ENCODE measurements at regions of chr7 and their contacts with region 1.

Region 1: GRCh38 chr7:90346336-90347125 is at the start of gene GTPBP10:
- DNase-seq: peak; percentile 88 to 99 (median 94)
- ATAC-seq: peak; percentile 92 to 99 (median 96)
- H3K4me3 ChIP-seq: peak within 1 kb of the TSS; percentile 86 to 90
- H3K4me3 Mint-ChIP-seq: peak within 1 kb of the TSS; percentile 93 to 95 (median 95)
- H3K27ac ChIP-seq: peak within 1 kb of the TSS; percentile 94
- H3K27ac Mint-ChIP-seq: peak within 1 kb of the TSS; percentile 97 to 99
- H3K4me1 ChIP-seq: peaks cover 13 to 19% of the 10 kb centered on the region in 2 experiments
- H3K4me1 Mint-ChIP-seq: peaks cover 50 to 57% (median 56%) of the 10 kb centered on the region in 3 donors
- H3K27me3 ChIP-seq: no peaks in the 10 kb centered on the region
- H3K27me3 Mint-ChIP-seq: no peaks in the 10 kb centered on the region
- total RNA-seq, gene GTPBP10: 18.4 to 31.8 (median 29.7) TPM

Region 2: GRCh38 chr7:89826557-89826956 is 520.0 kb before region 1 on chr7:
- CTCF ChIA-PET with region 1: no interaction called
- POLR2A ChIA-PET with region 1: no interaction called
- DNase-seq: no peak
- ATAC-seq: no peak
- H3K4me3 ChIP-seq: no peak overlapping the region
- H3K4me3 Mint-ChIP-seq: no peak overlapping the region
- H3K27ac ChIP-seq: no peak overlapping the region
- H3K27ac Mint-ChIP-seq: no peak overlapping the region
- H3K4me1 ChIP-seq: no peaks in the 10 kb centered on the region
- H3K4me1 Mint-ChIP-seq: no peaks in the 10 kb centered on the region
- H3K27me3 ChIP-seq: no peaks in the 10 kb centered on the region
- H3K27me3 Mint-ChIP-seq: no peaks in the 10 kb centered on the region

Region 3: GRCh38 chr7:90334193-90334843 is 12.2 kb before region 1 on chr7:
- CTCF ChIA-PET with region 1: no interaction called
- POLR2A ChIA-PET with region 1: no interaction called
- DNase-seq: no peak
- ATAC-seq: no peak
- H3K4me3 ChIP-seq: no peak overlapping the region
- H3K4me3 Mint-ChIP-seq: no peak overlapping the region
- H3K27ac ChIP-seq: no peak overlapping the region
- H3K27ac Mint-ChIP-seq: no peak overlapping the region
- H3K4me1 ChIP-seq: no peaks in the 10 kb centered on the region
- H3K4me1 Mint-ChIP-seq: no peaks in the 10 kb centered on the region
- H3K27me3 ChIP-seq: no peaks in the 10 kb centered on the region
- H3K27me3 Mint-ChIP-seq: peaks cover 5 to 8% of the 10 kb centered on the region in 2 donors

Region 4: DNA sequence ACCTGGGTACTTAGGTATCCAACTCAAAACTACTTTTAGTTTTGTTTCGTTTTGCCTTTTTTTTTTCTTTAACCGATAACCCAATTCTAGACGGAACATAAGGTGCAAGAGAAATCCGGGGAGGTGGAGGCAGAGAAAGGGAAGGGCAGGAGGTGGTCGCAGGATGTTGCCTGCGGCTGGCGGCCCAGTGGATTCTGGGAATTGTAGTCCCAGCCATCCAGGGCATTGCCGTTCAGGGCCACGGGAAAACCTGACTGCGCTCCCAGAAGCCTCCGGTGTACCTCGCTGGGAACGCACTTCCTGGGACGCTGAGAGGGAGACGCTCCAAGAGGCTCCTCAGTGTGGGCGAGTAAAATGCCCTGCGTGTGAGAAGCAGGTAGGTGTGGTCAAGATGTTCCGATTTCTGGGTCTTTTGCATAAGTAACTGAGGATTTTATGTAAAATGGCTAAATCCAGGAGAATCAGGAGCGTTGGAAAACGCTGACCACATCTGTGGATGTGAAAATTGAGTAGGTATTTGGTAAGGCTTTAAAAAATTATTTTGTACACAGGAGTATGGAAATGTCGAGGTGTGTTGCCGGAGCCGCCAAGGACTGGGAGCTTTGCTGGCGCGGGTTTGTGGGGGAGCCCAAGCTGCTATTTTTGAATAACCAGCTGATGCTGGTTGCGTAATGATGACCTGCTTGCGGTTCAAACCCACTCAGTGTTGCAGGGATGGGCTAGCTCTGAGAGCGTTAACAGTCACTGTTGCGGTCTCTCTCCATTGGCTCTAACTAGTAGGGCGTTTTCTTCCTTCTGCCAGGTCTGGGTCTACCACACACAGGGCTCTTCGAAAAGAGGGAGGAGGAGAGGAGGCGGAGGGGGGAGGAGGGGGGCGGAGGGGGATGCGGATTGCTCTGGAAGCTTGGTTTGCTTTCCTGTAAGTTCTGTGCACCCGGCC is 56.9 kb after region 1 on chr7 and contains the start of gene CLDN12:
- CTCF ChIA-PET with region 1: interaction called in 1 of 2 experiments, 8 read pairs
- POLR2A ChIA-PET with region 1: interaction called in 1 of 2 experiments, 16 read pairs
- DNase-seq: peak; percentile 13 to 89 (median 77)
- ATAC-seq: peak; percentile 91 to 98 (median 96)
- H3K4me3 ChIP-seq: peak within 1 kb of the TSS; percentile 89 to 99
- H3K4me3 Mint-ChIP-seq: peak within 1 kb of the TSS; percentile 89 to 96 (median 96)
- H3K27ac ChIP-seq: peak within 1 kb of the TSS; percentile 75
- H3K27ac Mint-ChIP-seq: peak within 1 kb of the TSS; percentile 79 to 88
- H3K4me1 ChIP-seq: peaks cover 9 to 12% of the 10 kb centered on the region in 2 experiments
- H3K4me1 Mint-ChIP-seq: peaks cover 14 to 22% (median 17%) of the 10 kb centered on the region in 3 donors
- H3K27me3 ChIP-seq: no peaks in the 10 kb centered on the region
- H3K27me3 Mint-ChIP-seq: peaks cover 0 to 1% of the 10 kb centered on the region in 2 donors
- total RNA-seq, gene CLDN12: 1.8 to 3.7 (median 2.3) TPM

Region 5: GRCh38 chr7:90455163-90456030 is 108.9 kb after region 1 on chr7:
- CTCF ChIA-PET with region 1: no interaction called
- POLR2A ChIA-PET with region 1: no interaction called
- DNase-seq: peak in 4 of 35 experiments; percentile 7 to 57 (median 11)
- ATAC-seq: peak; percentile 53 to 75 (median 58)
- H3K4me3 ChIP-seq: no peak overlapping the region
- H3K4me3 Mint-ChIP-seq: peak overlapping the region in 1 of 3 donors; percentile 5
- H3K27ac ChIP-seq: no peak overlapping the region
- H3K27ac Mint-ChIP-seq: peak overlapping the region in 1 of 2 donors; percentile 58
- H3K4me1 ChIP-seq: no peaks in the 10 kb centered on the region
- H3K4me1 Mint-ChIP-seq: peaks cover 6 to 8% (median 7%) of the 10 kb centered on the region in 3 donors
- H3K27me3 ChIP-seq: peaks cover 2 to 3% of the 10 kb centered on the region in 2 experiments
- H3K27me3 Mint-ChIP-seq: peaks cover 11 to 16% of the 10 kb centered on the region in 2 donors